Panc1 (cell line): ENCODE measurements at regions of chr6 and their contacts with region 1.

Region 1: DNA sequence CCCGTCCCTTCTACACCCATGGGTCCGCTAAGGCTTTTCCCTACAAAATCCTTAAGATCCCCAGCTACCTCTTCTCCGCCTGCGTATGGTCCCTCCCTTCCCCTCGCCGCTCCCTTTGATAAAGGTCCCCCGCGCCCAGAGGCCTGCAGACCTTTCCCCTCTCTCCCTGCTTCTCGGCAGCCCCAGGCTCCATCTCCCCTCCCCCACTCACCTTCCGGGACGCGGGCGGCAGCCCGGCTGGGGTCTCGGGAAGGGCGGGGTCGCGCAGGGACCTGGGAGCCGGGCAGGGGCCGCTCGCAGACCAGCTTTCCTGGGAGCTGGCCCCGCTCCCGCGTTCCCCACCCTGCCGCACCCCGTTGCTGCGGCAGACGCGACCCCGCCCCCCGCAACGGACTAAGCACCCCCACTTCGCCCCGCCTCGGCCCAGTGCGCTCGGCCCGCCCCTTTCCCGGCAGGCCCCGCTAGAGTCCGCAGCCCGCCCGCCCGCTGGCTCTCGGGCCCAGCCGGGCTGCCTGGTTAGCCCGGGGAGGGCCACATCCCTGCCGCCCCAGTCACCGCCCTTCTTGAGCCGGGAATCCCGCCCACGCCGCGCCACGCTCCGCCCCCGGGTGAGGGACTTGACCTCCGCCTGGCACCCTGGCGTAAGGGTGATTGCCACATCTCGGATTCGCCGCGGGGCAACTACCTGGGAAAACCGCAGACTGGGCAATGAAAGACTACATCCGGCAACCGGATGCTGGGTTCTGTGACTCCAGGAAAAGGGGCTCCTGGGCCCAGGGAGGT is at the start of gene FLOT1:
- DNase-seq: peak; percentile 85
- ATAC-seq: peak; percentile 80
- H3K4me3 ChIP-seq: peak within 1 kb of the TSS; percentile 81 to 85
- H3K27ac ChIP-seq: peak within 1 kb of the TSS; percentile 97
- H3K4me1 ChIP-seq: peaks cover 39% of the 10 kb centered on the region
- H3K27me3 ChIP-seq: no peaks in the 10 kb centered on the region
- CTCF ChIP-seq: no peak
- total RNA-seq, gene FLOT1: 176 TPM

Region 2: DNA sequence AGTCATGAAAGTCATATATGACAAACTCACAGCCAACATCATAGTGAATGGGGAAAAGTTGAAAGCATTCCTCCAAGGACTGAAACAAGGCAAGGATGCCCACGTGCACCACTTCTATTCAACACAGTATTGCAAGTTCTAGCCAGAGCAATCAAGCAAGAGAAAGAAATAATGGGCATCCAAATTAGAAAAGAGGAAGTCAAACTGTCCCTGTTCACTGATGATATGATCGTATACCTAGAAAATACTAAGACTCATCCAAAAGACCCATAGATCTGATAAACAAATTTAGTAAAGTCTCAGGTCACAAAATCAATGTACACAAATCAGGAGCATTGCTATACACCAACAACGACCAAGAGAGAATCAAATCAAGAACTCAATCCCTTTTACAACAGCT is 356.3 kb before region 1 on chr6:
- CTCF ChIA-PET with region 1: no interaction called
- POLR2A ChIA-PET with region 1: no interaction called
- in situ Hi-C with region 1: no loop called
- intact Hi-C with region 1: no loop called
- DNase-seq: no peak
- ATAC-seq: no peak
- H3K4me3 ChIP-seq: no peak overlapping the region
- H3K27ac ChIP-seq: no peak overlapping the region
- H3K4me1 ChIP-seq: no peaks in the 10 kb centered on the region
- H3K27me3 ChIP-seq: peaks cover 21% of the 10 kb centered on the region
- CTCF ChIP-seq: no peak

Region 3: DNA sequence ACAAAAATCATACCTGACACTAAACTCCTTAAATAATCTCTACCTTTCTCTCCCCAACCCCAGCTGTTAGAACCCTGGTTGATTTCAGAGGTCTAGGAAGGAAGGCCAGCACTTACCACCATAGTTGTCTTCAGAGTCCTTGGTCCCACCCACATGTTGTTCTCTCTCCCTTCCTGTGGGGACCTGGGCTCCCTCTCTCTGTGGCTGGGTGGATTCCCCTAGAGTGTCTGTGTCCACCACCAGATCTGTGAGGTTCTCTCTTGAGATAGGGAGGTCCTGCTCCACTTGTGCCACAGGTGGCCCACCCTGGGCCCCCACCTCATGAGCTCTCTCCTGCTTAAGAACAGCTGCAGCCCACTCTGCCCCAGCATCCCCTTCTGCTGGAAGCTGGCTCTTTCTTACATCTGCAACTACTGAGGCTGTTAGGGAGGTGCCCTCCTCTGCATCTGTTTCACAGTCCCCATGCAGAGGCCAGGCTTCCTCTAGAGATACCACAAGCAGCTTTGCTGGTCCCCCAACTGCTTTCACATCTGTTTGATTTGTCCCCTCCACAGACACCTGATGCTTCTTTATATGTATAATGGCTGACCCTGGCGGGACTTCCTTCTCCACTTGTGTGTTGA is 30.6 kb before region 1 on chr6:
- CTCF ChIA-PET with region 1: no interaction called
- POLR2A ChIA-PET with region 1: no interaction called
- in situ Hi-C with region 1: no loop called
- intact Hi-C with region 1: no loop called
- DNase-seq: no peak
- ATAC-seq: no peak
- H3K4me3 ChIP-seq: no peak overlapping the region
- H3K27ac ChIP-seq: no peak overlapping the region
- H3K4me1 ChIP-seq: peaks cover 14% of the 10 kb centered on the region
- H3K27me3 ChIP-seq: no peaks in the 10 kb centered on the region
- CTCF ChIP-seq: no peak

Region 4: GRCh38 chr6:30781743-30782424 is 39.4 kb after region 1 on chr6:
- CTCF ChIA-PET with region 1: no interaction called
- POLR2A ChIA-PET with region 1: interaction called, 7 read pairs
- in situ Hi-C with region 1: no loop called
- intact Hi-C with region 1: loop called (anchors 5 kb)
- DNase-seq: peak; percentile 98
- ATAC-seq: peak; percentile 78
- H3K4me3 ChIP-seq: peak overlapping the region in 1 of 2 experiments; percentile 24; a peak in 2 of 4 replicates
- H3K27ac ChIP-seq: peak overlapping the region; percentile 90
- H3K4me1 ChIP-seq: peaks cover 62% of the 10 kb centered on the region
- H3K27me3 ChIP-seq: no peaks in the 10 kb centered on the region
- CTCF ChIP-seq: no peak

Region 5: DNA sequence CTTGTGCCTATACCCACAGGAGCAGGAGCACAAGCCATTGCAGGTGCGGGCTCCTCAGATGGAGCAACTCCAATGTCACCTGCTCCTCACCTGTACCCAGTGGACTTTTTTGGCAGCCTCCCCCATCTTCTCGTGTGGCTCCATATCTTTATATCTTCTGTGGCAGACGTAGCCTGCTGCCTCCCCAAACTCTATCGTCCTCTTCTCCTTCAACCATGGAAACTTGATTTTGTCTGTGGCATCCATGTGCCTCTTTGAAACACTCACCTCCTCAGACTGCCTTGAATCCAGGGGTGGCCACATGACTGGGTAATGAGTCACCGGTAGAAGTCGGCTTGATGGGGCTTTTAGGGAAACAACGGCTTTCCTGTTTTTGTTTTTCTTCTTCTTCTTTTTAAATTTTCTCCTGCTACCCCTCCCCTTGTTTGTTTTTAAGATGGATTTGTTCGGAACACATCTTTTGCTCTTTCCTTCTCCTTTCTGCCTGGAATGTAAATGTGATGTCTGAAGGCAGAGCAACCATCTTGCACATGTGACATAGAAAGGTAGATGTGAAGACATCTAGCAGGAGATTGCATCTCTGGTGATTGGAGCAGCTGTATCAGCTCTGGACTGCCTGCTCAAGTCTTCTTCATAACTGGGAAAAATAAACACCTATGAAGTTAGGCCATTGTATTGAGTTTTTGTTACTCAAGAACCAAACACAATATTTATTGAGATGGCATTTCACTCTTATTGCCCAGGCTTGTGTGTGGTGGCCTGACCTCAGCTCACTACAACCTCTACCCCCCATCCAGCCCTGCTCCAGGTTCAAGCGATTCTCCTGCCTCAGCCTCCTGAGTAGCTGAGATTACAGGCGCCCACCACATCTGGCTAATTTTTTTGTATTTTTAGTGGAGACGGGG is 71.9 kb after region 1 on chr6:
- CTCF ChIA-PET with region 1: no interaction called
- POLR2A ChIA-PET with region 1: interaction called, 10 read pairs
- in situ Hi-C with region 1: no loop called
- intact Hi-C with region 1: no loop called
- DNase-seq: no peak
- ATAC-seq: peak; percentile 82
- H3K4me3 ChIP-seq: no peak overlapping the region
- H3K27ac ChIP-seq: peak overlapping the region; percentile 85
- H3K4me1 ChIP-seq: peaks cover 20% of the 10 kb centered on the region
- H3K27me3 ChIP-seq: no peaks in the 10 kb centered on the region
- CTCF ChIP-seq: no peak

Region 6: GRCh38 chr6:30821862-30822782 is 79.6 kb after region 1 on chr6:
- CTCF ChIA-PET with region 1: interaction called, 4 read pairs
- POLR2A ChIA-PET with region 1: interaction called, 7 read pairs
- in situ Hi-C with region 1: no loop called
- intact Hi-C with region 1: loop called (anchors 2 kb)
- DNase-seq: no peak
- ATAC-seq: peak; percentile 60; the same call in 1 of the 2 replicates
- H3K4me3 ChIP-seq: peak overlapping the region in 1 of 2 experiments; percentile 32; a peak in 2 of 4 replicates
- H3K27ac ChIP-seq: peak overlapping the region; percentile 92
- H3K4me1 ChIP-seq: peaks cover 46% of the 10 kb centered on the region
- H3K27me3 ChIP-seq: no peaks in the 10 kb centered on the region
- CTCF ChIP-seq: peak; percentile 74

Region 7: DNA sequence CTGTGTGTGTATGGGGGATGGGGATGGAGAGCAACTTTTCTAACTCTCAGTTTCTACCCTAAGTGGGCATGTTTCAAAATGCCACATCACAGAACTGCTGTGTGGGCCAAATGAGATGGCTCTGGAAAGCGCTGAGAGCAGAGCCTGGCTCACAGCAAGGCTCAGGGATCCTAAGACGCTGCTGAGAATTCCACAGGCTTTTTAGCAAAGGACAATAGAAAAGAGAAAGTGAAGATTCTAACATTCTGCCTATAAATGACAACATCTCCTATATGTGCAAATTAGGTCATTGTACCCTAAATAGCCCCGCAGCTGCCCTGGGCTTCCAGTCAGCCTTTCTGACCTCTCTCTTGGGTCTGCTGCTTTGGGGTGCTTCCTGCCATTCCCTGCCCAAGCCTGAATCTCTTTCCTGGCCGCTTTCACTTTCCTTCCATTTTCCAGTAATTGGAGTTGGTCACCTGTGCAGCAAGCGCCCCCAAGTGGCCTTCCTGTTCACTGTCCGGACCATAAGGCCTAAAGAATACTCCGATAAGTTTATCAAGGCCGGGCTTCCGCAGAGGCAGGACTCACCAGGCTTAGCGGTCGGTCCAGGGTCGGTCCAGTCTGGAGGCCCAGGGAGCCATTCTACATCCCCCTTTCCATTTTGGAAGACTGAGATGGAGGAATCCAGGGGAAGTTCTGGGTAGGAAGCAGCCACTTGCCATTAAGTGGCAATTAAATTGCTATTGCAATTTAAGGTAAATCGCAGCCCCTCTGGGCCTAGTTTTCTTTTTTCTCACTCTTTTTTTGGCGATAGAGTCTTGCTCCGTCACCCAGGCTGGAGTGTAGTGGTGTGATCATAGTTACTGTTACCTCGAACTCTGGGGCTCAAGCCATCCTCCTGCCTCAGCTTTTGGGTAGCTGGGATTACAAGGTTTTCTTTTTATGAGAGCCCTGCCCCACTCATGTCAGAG is 135.2 kb after region 1 on chr6:
- CTCF ChIA-PET with region 1: no interaction called
- POLR2A ChIA-PET with region 1: no interaction called
- in situ Hi-C with region 1: no loop called
- intact Hi-C with region 1: loop called (anchors 1 kb)
- DNase-seq: peak; percentile 73
- ATAC-seq: peak; percentile 90
- H3K4me3 ChIP-seq: peak overlapping the region; percentile 19 to 57; a peak in 3 of 4 replicates
- H3K27ac ChIP-seq: peak overlapping the region; percentile 82
- H3K4me1 ChIP-seq: peaks cover 23% of the 10 kb centered on the region
- H3K27me3 ChIP-seq: no peaks in the 10 kb centered on the region
- CTCF ChIP-seq: peak; percentile 96